GM10248 (cell line): ENCODE measurements at regions of chr1 and their contacts with region 1.

Region 1: GRCh38 chr1:43934101-43934985 is 742 bp downstream of the ARTN start:
- DNase-seq: peak; percentile 90
- CTCF ChIP-seq: peak; percentile 92

Region 2: DNA sequence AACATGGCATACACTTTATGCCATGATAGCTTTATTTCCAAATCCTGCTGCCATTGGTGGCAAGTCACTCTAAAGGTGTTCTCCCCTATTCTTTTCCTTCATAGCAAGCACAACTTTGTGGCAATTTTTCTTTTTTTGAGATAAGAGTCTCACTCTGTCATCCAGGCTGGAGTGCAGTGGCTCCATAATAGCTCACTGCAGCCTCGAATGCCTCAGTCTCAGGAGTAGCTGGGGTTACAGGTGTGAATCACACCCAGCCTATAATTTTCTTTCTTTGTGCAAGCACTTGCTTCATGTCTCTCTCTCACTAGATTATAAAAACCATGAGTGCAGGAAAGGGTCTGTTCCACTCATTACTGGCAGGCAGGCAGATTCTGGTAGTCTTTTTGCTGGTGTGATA is 289.8 kb before region 1 on chr1:
- CTCF ChIA-PET with region 1: interaction called, 54 read pairs
- POLR2A ChIA-PET with region 1: no interaction called
- DNase-seq: no peak
- CTCF ChIP-seq: no peak

Region 3: GRCh38 chr1:43729816-43730463 is 204.4 kb before region 1 on chr1:
- CTCF ChIA-PET with region 1: interaction called, 11 read pairs
- POLR2A ChIA-PET with region 1: no interaction called
- DNase-seq: no peak
- CTCF ChIP-seq: no peak

Region 4: GRCh38 chr1:43836267-43836951 is 97.9 kb before region 1 on chr1:
- CTCF ChIA-PET with region 1: interaction called, 19 read pairs
- POLR2A ChIA-PET with region 1: no interaction called
- DNase-seq: peak; percentile 46
- CTCF ChIP-seq: no peak

Region 5: DNA sequence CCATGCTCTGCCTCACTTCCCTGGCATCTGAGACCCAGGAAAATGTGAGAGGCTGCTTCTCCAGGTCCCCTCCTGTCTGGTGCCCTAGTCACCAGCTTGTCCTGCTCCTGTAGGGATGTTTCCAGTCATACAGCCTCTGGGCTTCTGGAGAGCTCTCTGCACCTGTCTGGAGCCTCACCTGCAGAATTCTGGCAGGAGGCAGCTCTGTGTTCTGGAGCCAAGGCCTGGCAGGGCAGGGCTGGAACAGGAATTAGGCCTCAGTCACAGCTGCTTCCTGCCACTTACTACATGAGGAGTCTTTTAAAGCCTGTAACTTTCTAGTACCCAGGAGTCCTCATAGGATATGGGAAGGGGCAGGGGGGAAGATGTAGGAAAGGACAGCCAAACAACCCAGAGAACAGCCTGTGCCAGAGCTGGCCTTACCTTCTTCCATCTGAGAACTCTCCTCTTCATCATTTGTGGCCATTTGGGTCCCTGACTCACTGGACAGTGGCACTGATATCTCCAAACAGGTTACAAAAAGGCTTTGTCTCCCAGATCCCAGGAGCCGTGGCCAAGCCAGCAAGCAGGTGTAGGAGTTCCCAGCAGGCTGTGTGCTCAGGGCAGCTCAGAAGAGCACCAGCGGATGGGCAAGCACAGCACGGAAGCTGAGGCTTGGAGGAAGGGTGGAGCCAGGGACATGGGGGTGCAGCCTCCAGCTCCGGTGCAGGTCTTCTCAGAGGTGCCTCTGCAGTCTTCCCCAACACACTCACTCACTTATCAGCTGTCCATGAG is 32.1 kb before region 1 on chr1:
- CTCF ChIA-PET with region 1: interaction called, 35 read pairs
- POLR2A ChIA-PET with region 1: no interaction called
- DNase-seq: no peak
- CTCF ChIP-seq: no peak

Region 6: DNA sequence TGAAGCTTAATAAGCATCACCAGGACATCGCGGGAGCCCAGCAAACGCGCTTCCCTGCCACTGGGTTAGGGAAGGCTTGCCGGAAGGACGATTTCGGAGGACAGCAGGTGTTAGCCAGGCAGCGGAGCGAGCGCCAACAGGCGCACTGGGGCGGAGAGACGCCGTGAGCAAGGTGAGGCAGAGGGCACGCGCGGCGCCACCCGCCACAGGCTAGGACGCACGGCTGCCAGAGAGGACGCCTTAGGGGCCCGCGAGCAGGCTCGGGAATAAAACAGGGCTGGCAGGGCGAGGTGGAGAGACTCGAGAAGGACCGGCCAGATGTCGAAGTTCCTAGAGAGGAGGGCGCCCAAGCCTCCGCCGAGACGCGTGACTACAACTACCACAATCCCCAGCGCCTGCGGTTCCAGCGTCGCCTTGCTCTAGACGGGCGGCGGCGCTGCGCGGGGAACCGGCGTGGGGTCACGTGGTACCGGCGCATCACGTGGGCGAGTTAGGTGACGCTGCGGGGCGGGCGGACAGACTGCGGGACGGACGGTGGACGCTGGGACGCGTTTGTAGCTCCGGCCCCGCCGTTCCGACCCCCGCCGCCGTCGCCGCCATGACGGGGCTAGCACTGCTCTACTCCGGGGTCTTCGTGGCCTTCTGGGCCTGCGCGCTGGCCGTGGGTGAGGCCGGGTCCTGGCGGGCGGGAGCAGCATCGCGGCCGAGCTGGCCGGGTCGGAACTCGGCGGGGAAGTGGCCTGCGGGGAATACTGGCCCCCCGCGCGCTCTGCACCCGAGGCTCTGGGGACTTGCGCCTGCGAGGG is 40.3 kb after region 1 on chr1 and contains the start of gene ATP6V0B:
- CTCF ChIA-PET with region 1: interaction called, 21 read pairs
- POLR2A ChIA-PET with region 1: no interaction called
- DNase-seq: peak; percentile 97
- CTCF ChIP-seq: peak; percentile 20